ENCODE measurements at regions of chr11 and their contacts with region 1.

Region 1: GRCh38 chr11:75004215-75004614 is 15.5 kb downstream of the NEU3 start:
- DNase-seq: no peak
- H3K4me3 Mint-ChIP-seq: no peak overlapping the region
- H3K27ac Mint-ChIP-seq: no peak overlapping the region
- H3K4me1 Mint-ChIP-seq: peaks cover 14% of the 10 kb centered on the region
- H3K27me3 Mint-ChIP-seq: no peaks in the 10 kb centered on the region

Region 2: GRCh38 chr11:75063732-75064314 is 59.6 kb after region 1 on chr11:
- intact Hi-C with region 1: loop called (anchors 10 kb)
- DNase-seq: no peak
- H3K4me3 Mint-ChIP-seq: no peak overlapping the region
- H3K27ac Mint-ChIP-seq: no peak overlapping the region
- H3K4me1 Mint-ChIP-seq: no peaks in the 10 kb centered on the region
- H3K27me3 Mint-ChIP-seq: peaks cover 31% of the 10 kb centered on the region

Measured in activated T-helper 2 cell treated with anti-CD3 and anti-CD28 coated beads, Interferon-gamma antibody, Interleukin-2, Interleukin-4, amounts not matched to agents 10 μg/mL and 5 μg/mL and 100 μg/mL, durations not matched to agents 14 hours and 24 hours and 36 hours (primary cell).